Astrocyte of the cerebellum (primary cell): ENCODE measurements at regions of chr1 and their contacts with region 1.

Region 1: DNA sequence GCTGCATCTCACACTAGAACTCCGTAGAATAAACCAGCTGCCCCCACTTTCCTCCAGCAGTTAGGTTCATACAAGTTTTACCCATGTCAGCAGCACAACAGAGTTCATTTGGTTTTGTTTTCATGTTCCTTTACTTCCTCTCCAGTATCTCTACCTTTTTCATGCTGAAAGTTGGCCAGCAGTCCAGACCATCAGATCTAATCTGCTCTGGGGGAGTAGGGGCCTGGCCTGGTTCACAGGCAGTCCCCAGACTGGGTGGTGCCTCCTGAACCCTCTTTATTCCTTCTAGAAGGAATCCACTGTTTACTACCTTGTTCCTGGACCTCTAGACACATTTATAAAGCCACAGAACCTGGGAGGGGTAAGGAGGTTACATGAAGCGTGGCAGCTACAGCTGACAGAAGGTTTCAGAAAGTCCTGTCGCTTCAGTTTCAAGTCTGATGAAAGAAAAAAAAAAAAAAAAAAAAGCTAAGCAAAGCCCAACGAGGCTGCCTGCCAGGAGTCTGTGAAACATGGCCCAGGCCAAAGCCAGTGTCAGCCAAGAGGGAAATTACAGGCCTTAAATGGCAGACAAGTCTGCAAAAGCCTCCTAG is 184.6 kb upstream of the JUN start:
- DNase-seq: peak; percentile 32
- H3K4me3 ChIP-seq: no peak overlapping the region
- CTCF ChIP-seq: no peak

Region 2: DNA sequence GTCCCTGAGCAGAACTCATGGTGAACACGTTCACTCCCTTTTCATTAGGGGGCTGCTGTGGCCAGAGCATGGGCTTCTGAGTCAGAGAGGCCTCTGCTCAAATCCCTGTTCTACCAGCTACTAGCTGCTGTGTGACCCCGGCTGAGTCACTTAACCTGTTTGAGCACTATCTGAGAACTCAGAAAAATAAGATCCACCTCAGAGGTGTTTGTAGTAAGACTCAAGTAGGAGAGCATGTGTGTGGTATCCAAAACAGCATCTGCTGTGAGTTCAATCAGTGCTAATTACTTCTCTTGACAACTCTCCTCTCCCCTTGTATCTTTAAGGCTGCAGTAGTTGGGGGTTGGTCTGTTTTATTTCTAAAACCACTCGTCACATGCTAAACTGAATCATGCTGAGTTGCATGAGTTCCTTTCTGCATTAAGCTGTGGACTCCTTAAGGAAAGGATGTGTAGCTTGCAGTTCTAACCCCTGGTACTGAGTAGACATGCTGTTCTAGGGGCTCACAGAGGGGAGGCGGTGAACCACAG is 144.9 kb before region 1 on chr1:
- in situ Hi-C with region 1: loop called (anchors 5 kb)
- DNase-seq: peak; percentile 49
- H3K4me3 ChIP-seq: no peak overlapping the region
- CTCF ChIP-seq: no peak

Region 3: GRCh38 chr1:59007820-59008598 is 39.6 kb after region 1 on chr1:
- in situ Hi-C with region 1: no loop called
- DNase-seq: peak; percentile 91
- H3K4me3 ChIP-seq: no peak overlapping the region
- CTCF ChIP-seq: no peak